Mucosa of descending colon (tissue), 3 donors: ENCODE measurements at regions of chr12 and their contacts with region 1.

Region 1: DNA sequence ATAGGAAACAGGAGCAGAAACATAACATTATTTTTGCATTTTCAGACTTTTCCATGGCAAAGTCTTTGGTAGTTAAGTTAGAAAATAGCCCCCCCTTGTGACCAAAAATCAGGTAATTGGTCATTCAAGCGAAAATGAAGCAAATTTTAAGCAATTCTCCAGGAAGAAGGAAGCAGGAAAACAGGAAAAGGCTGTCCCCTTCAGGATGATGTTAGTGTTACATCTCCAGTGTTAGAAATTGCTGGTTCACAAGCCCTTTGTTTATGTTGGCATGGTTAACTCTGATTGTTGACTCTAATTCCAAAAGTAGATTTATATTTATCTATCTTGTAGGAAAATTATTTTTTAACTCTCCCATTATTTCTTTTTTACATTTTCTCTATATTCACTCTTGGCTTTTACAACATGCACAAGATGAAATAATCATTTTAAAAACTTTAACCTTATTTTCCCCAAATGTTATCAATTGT is 18.8 kb upstream of the GAS2L3 start:
- DNase-seq: peak in 1 of 3 donors; percentile 77
- ATAC-seq: peak; percentile 88
- H3K4me3 ChIP-seq: no peak overlapping the region
- H3K4me1 ChIP-seq: no peaks in the 10 kb centered on the region
- CTCF ChIP-seq: peak; percentile 63

Region 2: GRCh38 chr12:100234598-100235304 is 319.9 kb before region 1 on chr12:
- intact Hi-C with region 1: loop called (anchors 5 to 10 kb)
- DNase-seq: peak in 1 of 3 donors; percentile 36
- ATAC-seq: peak; percentile 62
- H3K4me3 ChIP-seq: no peak overlapping the region
- H3K4me1 ChIP-seq: peaks cover 16% of the 10 kb centered on the region
- CTCF ChIP-seq: peak; percentile 75

Region 3: GRCh38 chr12:100356644-100357223 is 197.9 kb before region 1 on chr12 and contains the start of gene SLC17A8:
- intact Hi-C with region 1: loop called in 1 of 2 experiments (anchors 10 kb)
- DNase-seq: no peak
- ATAC-seq: peak; percentile 72
- H3K4me3 ChIP-seq: no peak within 1 kb of the TSS
- H3K4me1 ChIP-seq: peaks cover 5% of the 10 kb centered on the region
- CTCF ChIP-seq: no peak
- total RNA-seq, gene SLC17A8: 2.6 to 3.0 (median 2.7) TPM

Region 4: GRCh38 chr12:100391856-100392255 is 162.8 kb before region 1 on chr12:
- intact Hi-C with region 1: loop called in 1 of 2 experiments (anchors 5 kb)
- DNase-seq: peak in 1 of 3 donors; percentile 86
- ATAC-seq: peak; percentile 58
- H3K4me3 ChIP-seq: no peak overlapping the region
- H3K4me1 ChIP-seq: no peaks in the 10 kb centered on the region
- CTCF ChIP-seq: no peak

Region 5: DNA sequence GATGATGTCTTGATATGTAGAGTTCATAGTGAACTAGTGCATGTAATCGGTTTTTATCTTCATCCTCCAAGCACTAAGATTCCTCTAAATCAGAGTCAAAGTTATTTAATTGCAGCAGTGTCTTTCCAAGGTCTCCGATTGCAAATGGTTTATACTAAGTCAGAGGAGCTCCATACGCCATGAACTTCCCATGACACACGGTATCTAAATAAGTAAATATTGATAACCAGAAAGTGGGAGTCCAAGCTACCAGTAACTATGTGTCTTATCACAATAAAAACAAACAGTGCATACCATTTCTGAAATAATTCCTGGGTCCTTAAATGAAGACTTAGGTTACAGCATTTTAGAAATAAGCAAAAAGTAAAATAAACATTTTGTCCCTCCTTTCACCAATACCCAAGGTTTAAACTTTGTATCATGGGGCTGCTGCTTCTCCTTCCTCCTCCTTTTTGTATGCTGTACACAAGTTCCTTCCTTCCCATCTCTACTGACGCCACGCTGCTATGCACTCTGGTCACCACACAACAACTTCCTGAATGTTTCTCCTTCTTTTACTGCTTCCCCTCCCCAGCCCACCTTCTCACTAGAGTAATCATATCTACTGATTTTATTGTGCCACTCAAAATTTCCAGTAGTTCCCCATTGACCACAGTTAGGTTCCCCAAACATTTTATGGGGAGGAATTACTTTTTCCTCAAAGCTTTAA is 70.3 kb before region 1 on chr12:
- intact Hi-C with region 1: no loop called
- DNase-seq: no peak
- ATAC-seq: peak; percentile 55
- H3K4me3 ChIP-seq: no peak overlapping the region
- H3K4me1 ChIP-seq: no peaks in the 10 kb centered on the region
- CTCF ChIP-seq: no peak